Prostate gland (tissue), 2 donors: ENCODE measurements at regions of chr7 and their contacts with region 1.

Region 1: GRCh38 chr7:148884299-148885022 is 370 bp upstream of the EZH2 start:
- DNase-seq: peak; percentile 92
- H3K4me3 ChIP-seq: peak overlapping the region; percentile 89 to 91
- H3K27ac ChIP-seq: peak overlapping the region; percentile 78 to 93
- H3K4me1 ChIP-seq: no peaks in the 10 kb centered on the region
- H3K27me3 ChIP-seq: no peaks in the 10 kb centered on the region
- CTCF ChIP-seq: no peak
- POLR2A ChIP-seq: peak; percentile 83

Region 2: GRCh38 chr7:148698397-148699023 is 186.0 kb before region 1 on chr7 and contains the start of gene CUL1:
- intact Hi-C with region 1: loop called (anchors 10 kb)
- DNase-seq: peak; percentile 81
- H3K4me3 ChIP-seq: peak within 1 kb of the TSS; percentile 64 to 95
- H3K27ac ChIP-seq: peak within 1 kb of the TSS; percentile 87 to 97
- H3K4me1 ChIP-seq: peaks cover 2% of the 10 kb centered on the region
- H3K27me3 ChIP-seq: no peaks in the 10 kb centered on the region
- CTCF ChIP-seq: no peak
- POLR2A ChIP-seq: peak; percentile 58
- total RNA-seq, gene CUL1: 39.0 to 105 TPM

Region 3: GRCh38 chr7:148940702-148941597 is 56.5 kb after region 1 on chr7:
- intact Hi-C with region 1: loop called (anchors 2 kb)
- DNase-seq: peak; percentile 69
- H3K4me3 ChIP-seq: peak overlapping the region; percentile 55 to 60
- H3K27ac ChIP-seq: peak overlapping the region; percentile 77 to 83
- H3K4me1 ChIP-seq: no peaks in the 10 kb centered on the region
- H3K27me3 ChIP-seq: no peaks in the 10 kb centered on the region
- CTCF ChIP-seq: no peak
- POLR2A ChIP-seq: peak; percentile 41

Region 4: DNA sequence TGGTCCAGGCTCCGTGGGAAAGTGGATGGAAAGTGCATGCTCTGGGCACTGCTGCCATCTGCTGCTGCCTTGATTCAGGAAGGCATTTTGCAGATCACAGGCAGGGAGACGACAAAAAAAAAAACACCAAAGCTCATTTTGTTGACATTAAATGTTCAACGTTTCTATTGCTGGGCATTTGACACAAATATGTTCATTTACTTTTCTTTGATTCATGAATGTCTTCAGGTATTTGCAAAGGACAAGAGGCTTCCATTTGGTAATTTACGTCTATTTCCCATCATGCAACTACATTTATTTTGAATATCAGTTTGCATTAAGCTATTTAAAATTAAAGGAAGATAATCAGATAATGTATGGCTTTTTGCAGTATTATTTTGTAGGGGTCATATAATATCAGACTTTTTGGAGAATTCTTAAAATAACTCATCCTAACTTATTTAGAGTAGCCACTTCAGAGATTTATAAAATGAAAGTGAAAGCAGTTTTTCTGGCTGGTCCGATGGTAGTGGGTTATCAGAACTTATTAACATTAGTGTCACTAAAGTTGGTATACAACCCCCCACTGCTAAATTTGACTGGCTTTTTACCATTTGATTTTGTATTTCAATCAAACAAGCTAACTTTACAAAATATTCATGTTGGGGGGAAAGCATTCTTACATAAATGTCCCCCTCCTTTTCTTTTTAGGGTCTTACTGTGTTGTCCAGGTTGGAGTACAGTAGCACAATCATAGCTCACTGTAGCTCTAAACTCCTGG is 78.5 kb after region 1 on chr7:
- intact Hi-C with region 1: loop called (anchors 5 kb)
- DNase-seq: peak; percentile 55
- H3K4me3 ChIP-seq: peak overlapping the region; percentile 35 to 42
- H3K27ac ChIP-seq: peak overlapping the region; percentile 29 to 49
- H3K4me1 ChIP-seq: no peaks in the 10 kb centered on the region
- H3K27me3 ChIP-seq: no peaks in the 10 kb centered on the region
- CTCF ChIP-seq: peak in 3 of 4 experiments; percentile 60 to 69 (median 61)
- POLR2A ChIP-seq: no peak

Region 5: GRCh38 chr7:149090397-149091195 is 206.1 kb after region 1 on chr7 and contains the start of gene ZNF786:
- intact Hi-C with region 1: loop called (anchors 10 kb)
- DNase-seq: peak; percentile 81
- H3K4me3 ChIP-seq: peak within 1 kb of the TSS; percentile 85 to 95
- H3K27ac ChIP-seq: peak within 1 kb of the TSS; percentile 98
- H3K4me1 ChIP-seq: no peaks in the 10 kb centered on the region
- H3K27me3 ChIP-seq: no peaks in the 10 kb centered on the region
- CTCF ChIP-seq: peak; percentile 79 to 97 (median 92)
- POLR2A ChIP-seq: peak; percentile 71
- total RNA-seq, gene ZNF786: 9.3 to 12.8 TPM

Region 6: DNA sequence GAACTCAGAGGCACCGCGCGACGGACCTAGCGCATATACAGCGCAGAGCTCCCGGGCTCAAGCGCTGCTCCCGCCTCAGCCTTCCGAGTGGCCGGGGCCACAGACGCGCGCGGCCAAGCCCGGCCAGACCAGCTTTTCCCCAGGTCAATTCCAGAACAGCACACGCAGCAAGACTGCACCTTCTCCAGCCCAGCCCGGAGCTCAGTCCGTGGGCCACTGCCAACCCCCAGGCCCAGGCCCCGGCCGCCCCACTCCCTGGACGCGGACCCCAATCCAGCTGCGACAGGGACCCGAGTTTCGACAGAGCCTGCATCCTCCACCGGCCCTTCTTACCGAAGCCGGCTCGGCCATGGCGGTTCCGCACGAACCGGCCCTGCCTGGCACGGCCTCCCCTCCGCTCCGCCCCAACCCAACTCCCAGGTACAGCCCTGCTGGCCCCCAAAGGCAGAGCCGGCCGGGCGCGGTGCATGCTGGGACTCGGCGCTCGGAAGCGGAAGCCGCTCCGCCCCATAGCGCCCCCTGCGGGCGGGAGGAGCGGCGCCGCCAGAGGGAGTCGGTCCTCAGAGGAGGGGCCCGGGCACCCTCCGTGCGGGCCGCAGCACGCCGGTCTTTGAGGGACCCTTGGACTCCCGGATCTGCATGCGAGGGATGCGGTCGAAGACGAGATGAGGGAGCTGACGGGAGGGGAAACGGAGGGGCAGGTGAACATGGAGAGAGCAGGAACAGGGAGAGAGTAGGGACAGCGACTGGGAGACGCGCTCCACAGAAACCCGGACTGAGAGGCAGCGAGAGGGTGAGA is 241.6 kb after region 1 on chr7 and contains the start of gene ZNF425:
- intact Hi-C with region 1: loop called (anchors 10 kb)
- DNase-seq: peak; percentile 88
- H3K4me3 ChIP-seq: peak within 1 kb of the TSS; percentile 58 to 84
- H3K27ac ChIP-seq: peak within 1 kb of the TSS; percentile 98
- H3K4me1 ChIP-seq: no peaks in the 10 kb centered on the region
- H3K27me3 ChIP-seq: no peaks in the 10 kb centered on the region
- CTCF ChIP-seq: peak; percentile 99 to 100 (median 99)
- POLR2A ChIP-seq: peak; percentile 96
- total RNA-seq, gene ZNF425: 2.8 to 4.0 TPM